ENCODE measurements at regions of chr19 and their contacts with region 1.

Region 1: DNA sequence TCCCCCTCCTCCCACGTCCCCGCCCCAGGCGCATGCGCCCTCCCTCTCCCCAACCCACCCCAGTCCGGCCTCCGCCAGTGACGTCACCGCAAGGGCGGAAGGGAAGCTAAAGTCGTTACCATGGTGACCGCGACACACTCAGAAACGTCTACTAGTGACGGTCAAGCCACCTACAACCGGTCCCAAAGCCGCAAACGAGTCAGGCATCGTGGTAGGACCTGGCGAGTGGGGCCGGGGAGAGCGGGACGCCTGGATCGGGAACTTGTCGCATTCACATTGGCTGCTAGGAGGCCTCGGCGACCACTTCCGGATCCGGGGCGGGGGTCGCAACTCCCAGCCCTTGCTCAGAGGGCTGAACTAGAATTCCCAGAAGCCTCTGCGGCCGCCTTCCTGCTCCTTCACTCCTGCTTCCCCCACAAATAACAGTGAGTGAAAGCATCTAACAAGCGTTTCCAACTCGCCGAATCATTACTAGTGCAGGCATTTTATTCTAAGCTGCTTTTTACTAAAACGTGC is at the start of gene ZSCAN5A:
- DNase-seq: peak; percentile 99
- H3K27ac ChIP-seq: peak within 1 kb of the TSS; percentile 95
- CTCF ChIP-seq: no peak

Region 2: GRCh38 chr19:56090931-56091490 is 223.6 kb before region 1 on chr19:
- CTCF ChIA-PET with region 1: no interaction called
- POLR2A ChIA-PET with region 1: interaction called, 10 read pairs
- DNase-seq: peak; percentile 51
- H3K27ac ChIP-seq: peak overlapping the region; percentile 63
- CTCF ChIP-seq: no peak

Region 3: GRCh38 chr19:56547535-56547934 is 232.9 kb after region 1 on chr19:
- CTCF ChIA-PET with region 1: no interaction called
- POLR2A ChIA-PET with region 1: no interaction called
- DNase-seq: no peak
- H3K27ac ChIP-seq: no peak overlapping the region
- CTCF ChIP-seq: no peak

Region 4: GRCh38 chr19:56678205-56678604 is 363.6 kb after region 1 on chr19:
- CTCF ChIA-PET with region 1: no interaction called
- POLR2A ChIA-PET with region 1: no interaction called
- DNase-seq: no peak
- H3K27ac ChIP-seq: no peak overlapping the region
- CTCF ChIP-seq: no peak